WTC11 (cell line): ENCODE measurements at regions of chr17 and their contacts with region 1.

Region 1: GRCh38 chr17:81440876-81441244 is 45.6 kb downstream of the BAHCC1 start:
- DNase-seq: peak; percentile 84
- ATAC-seq: peak; percentile 77
- H3K4me3 Mint-ChIP-seq: no peak overlapping the region
- H3K27ac Mint-ChIP-seq: no peak overlapping the region
- H3K4me1 Mint-ChIP-seq: no peaks in the 10 kb centered on the region
- H3K27me3 Mint-ChIP-seq: no peaks in the 10 kb centered on the region
- CTCF ChIP-seq: peak; percentile 79

Region 2: GRCh38 chr17:81261582-81262336 is 179.1 kb before region 1 on chr17:
- CTCF ChIA-PET with region 1: no interaction called
- POLR2A ChIA-PET with region 1: no interaction called
- DNase-seq: no peak
- ATAC-seq: no peak
- H3K4me3 Mint-ChIP-seq: no peak overlapping the region
- H3K27ac Mint-ChIP-seq: no peak overlapping the region
- H3K4me1 Mint-ChIP-seq: no peaks in the 10 kb centered on the region
- H3K27me3 Mint-ChIP-seq: no peaks in the 10 kb centered on the region
- CTCF ChIP-seq: no peak

Region 3: DNA sequence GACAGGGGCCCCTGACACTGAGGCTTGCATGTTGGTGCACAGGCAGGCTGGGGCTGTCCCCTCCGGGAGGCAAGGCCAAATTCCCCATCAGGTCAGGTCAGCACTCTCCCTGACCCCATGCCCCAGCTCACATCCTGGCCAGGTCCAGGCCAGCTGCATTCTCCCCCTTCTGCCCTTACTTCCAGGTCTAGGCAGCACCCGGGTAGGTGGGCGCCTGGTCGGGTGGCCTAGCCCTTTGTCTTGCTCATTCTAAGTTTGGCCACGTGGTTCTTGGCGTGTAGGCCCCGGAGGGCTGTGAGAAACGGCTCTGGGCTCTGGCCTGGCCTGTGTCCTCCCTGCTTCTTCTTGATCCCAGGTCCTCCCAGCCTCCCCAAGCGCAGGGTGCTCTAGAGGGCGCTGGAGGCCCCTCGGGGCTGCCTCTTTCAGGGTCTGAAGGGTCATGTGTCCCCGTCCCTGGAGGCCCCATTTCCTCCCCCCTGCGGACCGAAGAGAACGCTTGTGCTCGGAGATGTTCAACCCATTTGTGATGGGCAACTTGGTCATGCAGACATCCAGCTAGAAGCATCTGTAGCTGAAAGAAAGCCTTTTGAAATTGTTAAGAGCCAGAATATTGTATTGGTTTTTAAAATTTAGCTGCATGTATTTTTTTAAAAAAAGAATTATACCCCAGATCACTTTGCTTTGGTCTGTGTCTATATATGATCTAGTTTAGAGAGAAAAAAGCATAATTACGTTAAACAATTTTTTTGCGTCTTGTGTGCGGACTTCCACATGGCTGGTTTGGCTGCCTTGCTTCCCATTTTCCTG is 38.9 kb before region 1 on chr17:
- CTCF ChIA-PET with region 1: interaction called, 12 read pairs
- POLR2A ChIA-PET with region 1: no interaction called
- DNase-seq: peak; percentile 71
- ATAC-seq: peak; percentile 16
- H3K4me3 Mint-ChIP-seq: peak overlapping the region; percentile 74
- H3K27ac Mint-ChIP-seq: peak overlapping the region; percentile 77
- H3K4me1 Mint-ChIP-seq: peaks cover 70% of the 10 kb centered on the region
- H3K27me3 Mint-ChIP-seq: peaks cover 88% of the 10 kb centered on the region
- CTCF ChIP-seq: no peak

Region 4: DNA sequence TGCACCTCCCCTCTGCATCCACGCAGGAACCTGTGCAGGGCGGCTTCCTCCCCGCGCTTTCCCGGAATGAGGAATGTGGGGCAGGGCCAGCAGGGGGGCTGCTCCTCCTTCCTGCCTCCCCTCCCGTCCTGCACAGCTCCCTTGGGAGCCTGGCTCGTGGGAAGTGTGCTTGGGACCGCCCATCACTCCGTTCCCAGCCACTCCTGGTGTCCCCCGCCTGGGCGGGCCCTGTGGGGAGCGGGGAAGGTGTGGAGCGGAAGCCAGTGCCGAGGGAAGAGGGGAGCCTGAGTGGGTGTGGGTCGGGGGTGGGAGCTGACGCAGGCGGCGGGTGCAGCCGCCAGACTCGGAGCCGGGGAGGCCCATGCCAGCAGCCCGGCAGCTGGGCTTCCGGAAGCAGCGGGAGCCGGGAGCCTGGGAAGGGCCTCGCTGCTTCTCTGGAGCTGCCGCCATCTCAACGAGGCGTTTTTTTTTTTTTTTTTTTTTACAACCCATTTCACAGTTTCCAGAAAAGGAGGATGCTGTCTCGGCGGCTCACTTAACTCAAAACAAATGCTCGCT is 21.5 kb before region 1 on chr17:
- CTCF ChIA-PET with region 1: interaction called, 22 read pairs
- POLR2A ChIA-PET with region 1: no interaction called
- DNase-seq: no peak
- ATAC-seq: peak; percentile 18; the same call in 1 of the 2 replicates
- H3K4me3 Mint-ChIP-seq: no peak overlapping the region
- H3K27ac Mint-ChIP-seq: no peak overlapping the region
- H3K4me1 Mint-ChIP-seq: no peaks in the 10 kb centered on the region
- H3K27me3 Mint-ChIP-seq: no peaks in the 10 kb centered on the region
- CTCF ChIP-seq: no peak

Region 5: DNA sequence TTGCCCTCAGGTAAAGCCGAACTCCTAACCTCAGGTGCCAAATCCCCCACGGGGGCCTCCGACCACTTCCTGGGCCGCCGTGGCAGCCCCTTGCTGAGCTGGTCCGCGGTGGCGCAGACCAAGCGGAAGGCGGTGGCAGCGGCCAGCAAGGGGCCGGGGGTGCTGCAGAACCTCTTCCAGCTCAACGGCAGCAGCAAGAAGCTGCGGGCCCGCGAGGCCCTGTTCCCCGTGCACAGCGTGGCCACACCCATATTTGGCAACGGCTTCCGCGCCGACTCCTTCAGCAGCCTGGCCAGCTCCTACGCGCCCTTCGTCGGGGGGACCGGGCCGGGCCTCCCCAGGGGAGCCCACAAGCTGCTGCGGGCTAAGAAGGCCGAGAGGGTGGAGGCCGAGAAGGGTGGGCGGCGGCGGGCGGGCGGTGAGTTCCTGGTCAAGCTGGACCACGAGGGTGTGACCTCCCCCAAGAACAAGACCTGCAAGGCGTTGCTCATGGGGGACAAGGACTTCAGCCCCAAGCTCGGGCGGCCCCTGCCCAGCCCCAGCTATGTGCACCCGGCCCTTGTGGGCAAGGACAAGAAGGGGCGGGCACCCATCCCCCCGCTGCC is 20.1 kb after region 1 on chr17:
- CTCF ChIA-PET with region 1: interaction called, 31 read pairs
- POLR2A ChIA-PET with region 1: no interaction called
- DNase-seq: no peak
- ATAC-seq: no peak
- H3K4me3 Mint-ChIP-seq: no peak overlapping the region
- H3K27ac Mint-ChIP-seq: no peak overlapping the region
- H3K4me1 Mint-ChIP-seq: 0 out of 2 replicates have a peak, but pooled peaks cover 3% of the 10 kb centered on the region
- H3K27me3 Mint-ChIP-seq: no peaks in the 10 kb centered on the region
- CTCF ChIP-seq: no peak

Region 6: DNA sequence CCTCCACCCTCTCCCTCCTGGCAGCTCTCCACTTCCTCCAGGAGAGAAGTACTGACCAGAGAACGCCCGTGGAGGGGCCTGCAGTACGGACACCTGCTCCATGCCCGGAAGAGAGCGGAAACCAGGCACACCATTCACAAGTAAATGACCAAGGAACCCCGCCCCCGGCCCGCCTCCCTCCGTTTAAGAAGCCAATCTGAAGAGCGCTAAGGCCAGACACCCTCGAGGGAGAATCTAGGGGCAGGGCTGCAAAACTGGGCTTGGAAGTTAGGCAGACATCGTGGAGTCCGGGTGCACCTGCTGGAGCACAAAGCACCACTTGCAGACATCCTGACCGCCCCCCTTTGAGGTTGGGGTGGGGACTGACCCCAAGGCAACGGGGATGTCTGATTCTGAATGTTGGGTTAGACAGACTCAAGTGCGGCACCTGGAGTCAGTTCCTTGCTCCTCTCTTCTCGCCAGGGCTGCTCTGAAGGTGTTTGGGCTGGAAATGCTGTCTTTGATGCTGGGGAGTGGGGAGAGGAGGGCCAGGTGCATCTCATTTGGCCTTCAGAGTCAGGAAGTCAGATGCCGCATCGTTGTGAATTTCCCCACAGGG is 112.3 kb after region 1 on chr17:
- CTCF ChIA-PET with region 1: no interaction called
- POLR2A ChIA-PET with region 1: no interaction called
- DNase-seq: peak; percentile 76
- ATAC-seq: peak; percentile 75
- H3K4me3 Mint-ChIP-seq: peak overlapping the region; percentile 85
- H3K27ac Mint-ChIP-seq: peak overlapping the region; percentile 92
- H3K4me1 Mint-ChIP-seq: peaks cover 20% of the 10 kb centered on the region
- H3K27me3 Mint-ChIP-seq: no peaks in the 10 kb centered on the region
- CTCF ChIP-seq: no peak